GM12878 (cell line): ENCODE measurements at regions of chr1 and their contacts with region 1.

Region 1: GRCh38 chr1:233675893-233676292 is 62.0 kb downstream of the KCNK1 start:
- DNase-seq: peak; percentile 75
- ATAC-seq: peak; percentile 88
- H3K4me3 ChIP-seq: no peak overlapping the region
- H3K27ac ChIP-seq: peak overlapping the region; percentile 1
- H3K4me1 ChIP-seq: peaks cover 19% of the 10 kb centered on the region
- H3K27me3 ChIP-seq: no peaks in the 10 kb centered on the region
- CTCF ChIP-seq: peak; percentile 16 to 19 (median 18); a peak in 1 of 6 replicates
- EP300 ChIP-seq: peak; percentile 70 to 88; a peak in 3 of 4 replicates
- POLR2A ChIP-seq: no peak
- RAD21 ChIP-seq: no peak

Region 2: GRCh38 chr1:233459470-233459945 is 216.4 kb before region 1 on chr1:
- CTCF ChIA-PET with region 1: interaction called, 3 read pairs
- POLR2A ChIA-PET with region 1: no interaction called
- RAD21 ChIA-PET with region 1: interaction called, 7 read pairs
- SMC1A ChIA-PET with region 1: interaction called, 4 read pairs
- in situ Hi-C with region 1: no loop called
- intact Hi-C with region 1: loop called (anchors 1 kb)
- DNase-seq: peak; percentile 83
- ATAC-seq: peak; percentile 90
- H3K4me3 ChIP-seq: no peak overlapping the region
- H3K27ac ChIP-seq: no peak overlapping the region
- H3K4me1 ChIP-seq: peaks cover 8% of the 10 kb centered on the region
- H3K27me3 ChIP-seq: no peaks in the 10 kb centered on the region
- CTCF ChIP-seq: no peak
- EP300 ChIP-seq: peak; percentile 59 to 60; a peak in 3 of 4 replicates
- POLR2A ChIP-seq: no peak
- RAD21 ChIP-seq: no peak

Region 3: DNA sequence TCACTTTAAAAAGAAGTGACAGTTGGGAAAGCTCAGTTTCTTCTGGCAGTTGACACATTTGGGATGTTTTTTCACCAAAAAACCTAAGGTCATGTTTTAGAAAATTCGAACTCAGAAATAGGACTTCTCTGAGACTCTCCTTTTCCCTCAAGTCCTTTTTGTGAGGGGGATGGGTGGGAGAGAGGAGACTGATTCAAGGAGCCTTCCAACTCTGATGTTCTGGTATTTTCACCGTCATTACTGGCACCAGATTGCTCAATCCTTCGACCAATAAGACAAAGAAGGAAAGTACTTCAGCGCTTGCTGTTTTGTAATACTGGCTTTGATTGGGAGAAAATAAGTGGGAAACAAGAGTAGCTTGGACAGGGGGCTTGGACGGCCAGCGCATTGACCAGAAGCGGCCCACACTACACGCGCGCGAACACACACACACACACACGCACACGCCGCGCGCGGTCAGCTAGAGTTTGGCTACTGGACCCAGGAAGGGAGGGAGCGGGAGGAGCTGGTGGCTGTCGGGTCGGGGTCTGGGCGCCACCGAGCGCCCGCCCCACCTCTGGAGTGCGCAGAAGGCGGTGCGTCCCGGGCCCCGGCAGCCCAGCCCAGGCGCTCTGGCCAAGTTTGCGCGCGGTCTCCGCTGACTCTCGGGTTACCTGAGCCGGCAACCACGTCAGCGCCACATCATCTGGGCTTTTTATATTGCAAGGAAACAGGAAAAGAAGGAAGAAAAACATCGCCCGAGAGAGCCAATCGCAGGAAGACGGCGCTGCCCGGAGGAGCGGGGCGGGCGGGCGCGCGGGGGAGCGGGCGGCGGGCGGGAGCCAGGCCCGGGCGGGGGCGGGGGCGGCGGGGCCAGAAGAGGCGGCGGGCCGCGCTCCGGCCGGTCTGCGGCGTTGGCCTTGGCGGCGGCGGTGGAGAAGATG is 62.4 kb before region 1 on chr1 and contains the start of gene KCNK1:
- CTCF ChIA-PET with region 1: interaction called, 4 read pairs
- POLR2A ChIA-PET with region 1: interaction called, 9 read pairs
- RAD21 ChIA-PET with region 1: interaction called, 39 read pairs
- SMC1A ChIA-PET with region 1: interaction called, 26 read pairs
- in situ Hi-C with region 1: no loop called
- intact Hi-C with region 1: loop called (anchors 1 kb)
- DNase-seq: no peak
- ATAC-seq: peak; percentile 51
- H3K4me3 ChIP-seq: peak within 1 kb of the TSS; percentile 81
- H3K27ac ChIP-seq: peak within 1 kb of the TSS; percentile 76
- H3K4me1 ChIP-seq: peaks cover 9% of the 10 kb centered on the region
- H3K27me3 ChIP-seq: no peaks in the 10 kb centered on the region
- CTCF ChIP-seq: no peak
- EP300 ChIP-seq: no peak
- POLR2A ChIP-seq: no peak
- RAD21 ChIP-seq: no peak
- polyA plus RNA-seq, gene KCNK1: 9.4 to 14.6 TPM

Region 4: GRCh38 chr1:233635765-233636502 is 40.0 kb before region 1 on chr1:
- CTCF ChIA-PET with region 1: no interaction called
- POLR2A ChIA-PET with region 1: interaction called, 13 read pairs
- RAD21 ChIA-PET with region 1: interaction called, 13 read pairs
- SMC1A ChIA-PET with region 1: interaction called, 24 read pairs
- in situ Hi-C with region 1: no loop called
- intact Hi-C with region 1: no loop called
- DNase-seq: no peak
- ATAC-seq: no peak
- H3K4me3 ChIP-seq: no peak overlapping the region
- H3K27ac ChIP-seq: no peak overlapping the region
- H3K4me1 ChIP-seq: peaks cover 18% of the 10 kb centered on the region
- H3K27me3 ChIP-seq: no peaks in the 10 kb centered on the region
- CTCF ChIP-seq: no peak
- EP300 ChIP-seq: no peak
- POLR2A ChIP-seq: no peak
- RAD21 ChIP-seq: no peak

Region 5: DNA sequence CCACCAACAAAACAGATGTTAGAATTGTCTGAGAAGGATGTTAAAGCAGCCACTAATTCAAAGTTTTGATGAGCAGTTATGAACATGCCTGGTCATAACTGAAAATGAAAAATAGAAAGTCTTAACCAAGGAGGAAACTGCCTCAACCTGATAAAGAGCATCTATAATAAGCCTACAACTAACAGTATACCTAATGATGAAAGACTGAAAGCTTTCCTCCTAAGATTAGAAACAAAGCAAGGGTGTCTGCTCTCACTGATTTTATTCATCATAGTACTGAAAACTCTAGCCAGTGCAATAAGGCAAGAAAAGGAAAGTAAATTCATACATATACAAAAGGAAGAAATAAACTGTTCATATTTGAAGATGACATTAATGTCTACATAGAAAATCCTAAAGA is 20.0 kb after region 1 on chr1:
- CTCF ChIA-PET with region 1: interaction called, 14 read pairs
- POLR2A ChIA-PET with region 1: interaction called, 5 read pairs
- RAD21 ChIA-PET with region 1: interaction called, 23 read pairs
- SMC1A ChIA-PET with region 1: interaction called, 34 read pairs
- in situ Hi-C with region 1: no loop called
- intact Hi-C with region 1: no loop called
- DNase-seq: no peak
- ATAC-seq: peak; percentile 75
- H3K4me3 ChIP-seq: no peak overlapping the region
- H3K27ac ChIP-seq: no peak overlapping the region
- H3K4me1 ChIP-seq: peaks cover 5% of the 10 kb centered on the region; the same call in 1 of the 2 replicates
- H3K27me3 ChIP-seq: no peaks in the 10 kb centered on the region
- CTCF ChIP-seq: no peak
- EP300 ChIP-seq: no peak
- POLR2A ChIP-seq: no peak
- RAD21 ChIP-seq: no peak

Region 6: DNA sequence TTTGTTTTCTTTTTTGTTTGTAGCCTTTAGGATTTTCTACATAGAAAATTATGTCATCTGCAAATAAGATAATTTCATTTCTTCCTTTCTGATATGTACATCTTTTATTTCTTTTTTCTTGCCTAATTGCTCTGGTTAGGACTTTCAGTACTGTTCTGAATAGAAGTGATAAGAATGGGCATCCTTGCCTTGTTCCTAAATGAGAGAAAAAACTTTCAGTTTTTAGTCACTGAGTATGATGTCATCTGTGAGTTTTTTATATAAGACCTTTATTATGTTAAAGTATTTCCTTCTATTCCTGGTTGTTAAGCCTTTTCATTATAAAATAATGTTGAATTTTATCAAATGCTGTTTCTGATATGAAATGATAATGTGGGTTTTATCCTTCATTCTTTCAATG is 152.6 kb after region 1 on chr1:
- CTCF ChIA-PET with region 1: no interaction called
- POLR2A ChIA-PET with region 1: no interaction called
- RAD21 ChIA-PET with region 1: no interaction called
- SMC1A ChIA-PET with region 1: no interaction called
- in situ Hi-C with region 1: no loop called
- intact Hi-C with region 1: no loop called
- DNase-seq: no peak
- ATAC-seq: no peak
- H3K4me3 ChIP-seq: no peak overlapping the region
- H3K27ac ChIP-seq: no peak overlapping the region
- H3K4me1 ChIP-seq: no peaks in the 10 kb centered on the region
- H3K27me3 ChIP-seq: no peaks in the 10 kb centered on the region
- CTCF ChIP-seq: no peak
- EP300 ChIP-seq: no peak
- POLR2A ChIP-seq: no peak
- RAD21 ChIP-seq: no peak

Region 7: DNA sequence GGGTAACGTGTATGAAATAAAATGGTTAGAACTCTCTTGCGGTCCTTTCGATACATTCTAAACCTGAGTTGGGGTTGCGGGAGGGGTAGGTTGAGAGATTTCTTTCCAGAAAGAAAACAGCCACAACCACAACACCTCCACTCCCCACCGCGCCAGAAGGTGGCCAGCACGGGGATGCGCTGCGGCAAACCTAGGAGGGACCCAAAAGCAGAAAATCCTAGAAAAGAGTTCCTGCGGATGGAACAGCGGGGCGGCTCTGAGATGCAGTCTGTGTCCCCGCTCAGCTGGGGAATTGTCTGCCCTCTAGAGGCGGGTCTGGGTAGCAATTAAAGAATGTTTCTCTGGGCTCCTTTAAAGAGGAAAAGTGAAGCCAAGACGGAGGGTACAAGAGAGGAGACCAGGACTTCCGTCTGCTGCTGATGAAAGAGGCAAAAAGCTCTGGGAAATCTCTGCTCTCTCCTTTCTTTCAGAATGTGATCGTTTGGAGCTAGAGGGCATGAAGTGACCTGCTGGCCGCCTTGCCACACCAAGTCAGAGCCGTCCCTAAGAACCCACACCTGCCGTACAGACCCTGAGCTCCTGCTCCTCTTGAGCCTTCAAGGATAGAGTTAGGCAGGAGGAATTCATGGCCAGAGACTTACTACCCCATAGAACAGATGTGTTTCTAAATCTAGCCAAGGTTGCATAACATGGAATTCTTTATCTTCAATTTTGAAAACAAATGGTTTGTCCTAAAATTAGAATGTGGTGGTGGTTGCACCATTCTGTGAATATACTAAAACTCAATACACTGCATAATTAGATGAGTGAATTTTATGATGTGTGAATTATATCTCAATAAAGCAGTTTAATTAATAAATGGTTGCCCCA is 650.8 kb after region 1 on chr1:
- CTCF ChIA-PET with region 1: no interaction called
- POLR2A ChIA-PET with region 1: no interaction called
- RAD21 ChIA-PET with region 1: no interaction called
- SMC1A ChIA-PET with region 1: no interaction called
- in situ Hi-C with region 1: no loop called
- intact Hi-C with region 1: no loop called
- DNase-seq: no peak
- ATAC-seq: peak; percentile 92
- H3K4me3 ChIP-seq: no peak overlapping the region
- H3K27ac ChIP-seq: no peak overlapping the region
- H3K4me1 ChIP-seq: peaks cover 5% of the 10 kb centered on the region
- H3K27me3 ChIP-seq: no peaks in the 10 kb centered on the region
- CTCF ChIP-seq: peak; percentile 77 to 87 (median 86)
- EP300 ChIP-seq: no peak
- POLR2A ChIP-seq: no peak
- RAD21 ChIP-seq: peak; percentile 76